Breast epithelium (tissue), 4 donors: ENCODE measurements at regions of chr6 and their contacts with region 1.

Region 1: GRCh38 chr6:83911278-83911677 is 51.8 kb downstream of the CYB5R4 start:
- DNase-seq: no peak
- H3K4me3 ChIP-seq: no peak overlapping the region
- H3K27ac ChIP-seq: no peak overlapping the region
- H3K4me1 ChIP-seq: no peaks in the 10 kb centered on the region
- H3K27me3 ChIP-seq: no peaks in the 10 kb centered on the region
- CTCF ChIP-seq: no peak
- POLR2A ChIP-seq: no peak

Region 2: GRCh38 chr6:84166395-84166794 is 255.1 kb after region 1 on chr6:
- intact Hi-C with region 1: loop called (anchors 5 kb)
- DNase-seq: no peak
- H3K4me3 ChIP-seq: no peak overlapping the region
- H3K27ac ChIP-seq: no peak overlapping the region
- H3K4me1 ChIP-seq: no peaks in the 10 kb centered on the region
- H3K27me3 ChIP-seq: no peaks in the 10 kb centered on the region
- CTCF ChIP-seq: no peak
- POLR2A ChIP-seq: no peak

Region 3: DNA sequence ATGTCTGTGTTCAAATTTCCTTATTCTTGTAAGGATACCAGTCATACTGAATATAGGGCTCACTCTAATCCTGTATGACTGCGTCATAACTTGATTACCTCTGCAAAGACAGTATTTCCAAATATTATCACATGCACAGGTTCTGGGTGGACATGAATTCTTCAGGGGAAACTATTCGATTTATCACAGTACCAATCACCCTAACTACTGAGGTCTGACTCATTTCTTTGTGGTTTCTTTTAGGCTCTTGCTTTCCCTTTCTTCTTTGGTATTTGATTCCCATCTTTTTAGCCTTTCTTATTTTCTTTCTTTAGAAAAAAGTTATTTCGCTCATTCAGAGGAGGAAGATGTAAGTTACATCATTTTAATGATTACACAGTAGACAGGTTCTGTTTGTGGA is 893.4 kb after region 1 on chr6:
- intact Hi-C with region 1: no loop called
- DNase-seq: no peak
- H3K4me3 ChIP-seq: no peak overlapping the region
- H3K27ac ChIP-seq: no peak overlapping the region
- H3K4me1 ChIP-seq: no peaks in the 10 kb centered on the region
- H3K27me3 ChIP-seq: no peaks in the 10 kb centered on the region
- CTCF ChIP-seq: no peak
- POLR2A ChIP-seq: no peak